Mammary epithelial cell (primary cell): ENCODE measurements at regions of chr11 and their contacts with region 1.

Region 1: DNA sequence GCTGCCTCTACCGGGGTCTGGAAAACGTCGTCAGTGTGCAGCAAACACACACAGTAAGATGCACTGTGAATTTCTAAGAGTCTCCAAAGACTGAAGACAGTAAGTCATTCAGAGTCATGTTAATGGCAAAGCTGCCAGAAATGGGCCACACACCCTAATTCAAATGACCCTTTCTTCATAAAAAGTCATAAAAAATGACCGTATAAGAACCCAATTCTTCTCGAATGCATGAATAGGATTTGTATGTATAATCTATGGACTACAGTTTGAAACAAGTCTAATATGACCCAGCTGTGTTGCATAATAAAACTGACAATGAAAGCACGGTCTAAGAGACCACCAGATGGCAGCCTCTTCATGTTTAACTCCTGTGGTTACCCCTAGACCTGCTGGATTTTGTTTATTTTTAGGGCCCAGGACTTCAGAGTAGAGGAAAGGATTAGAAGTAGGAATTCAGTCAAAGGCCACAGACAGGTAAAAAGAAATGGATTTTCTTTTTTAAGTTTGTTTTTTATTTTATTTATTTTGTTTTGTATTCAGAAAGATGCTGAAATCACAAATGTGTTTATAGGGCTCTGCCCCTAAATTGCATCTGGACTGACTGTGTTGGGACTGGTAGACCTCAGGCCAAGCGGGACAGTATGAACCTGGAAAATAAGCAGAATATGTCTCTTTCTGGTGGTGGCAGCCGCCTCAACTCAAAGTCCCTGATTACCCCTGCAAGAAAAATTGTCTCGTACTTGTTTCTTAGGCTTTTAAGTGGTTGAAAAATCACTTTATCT is 32.1 kb upstream of the SLC5A12 start:
- DNase-seq: peak; percentile 40
- H3K4me3 ChIP-seq: no peak overlapping the region
- H3K27ac ChIP-seq: no peak overlapping the region
- H3K4me1 ChIP-seq: no peaks in the 10 kb centered on the region
- H3K27me3 ChIP-seq: no peaks in the 10 kb centered on the region
- CTCF ChIP-seq: peak; percentile 72 to 81

Region 2: GRCh38 chr11:26792941-26793340 is 39.0 kb after region 1 on chr11:
- CTCF ChIA-PET with region 1: no interaction called
- dilution Hi-C with region 1: no loop called
- in situ Hi-C with region 1: no loop called
- intact Hi-C with region 1: no loop called
- DNase-seq: no peak
- H3K4me3 ChIP-seq: no peak overlapping the region
- H3K27ac ChIP-seq: no peak overlapping the region
- H3K4me1 ChIP-seq: no peaks in the 10 kb centered on the region
- H3K27me3 ChIP-seq: peaks cover 2% of the 10 kb centered on the region
- CTCF ChIP-seq: no peak

Region 3: DNA sequence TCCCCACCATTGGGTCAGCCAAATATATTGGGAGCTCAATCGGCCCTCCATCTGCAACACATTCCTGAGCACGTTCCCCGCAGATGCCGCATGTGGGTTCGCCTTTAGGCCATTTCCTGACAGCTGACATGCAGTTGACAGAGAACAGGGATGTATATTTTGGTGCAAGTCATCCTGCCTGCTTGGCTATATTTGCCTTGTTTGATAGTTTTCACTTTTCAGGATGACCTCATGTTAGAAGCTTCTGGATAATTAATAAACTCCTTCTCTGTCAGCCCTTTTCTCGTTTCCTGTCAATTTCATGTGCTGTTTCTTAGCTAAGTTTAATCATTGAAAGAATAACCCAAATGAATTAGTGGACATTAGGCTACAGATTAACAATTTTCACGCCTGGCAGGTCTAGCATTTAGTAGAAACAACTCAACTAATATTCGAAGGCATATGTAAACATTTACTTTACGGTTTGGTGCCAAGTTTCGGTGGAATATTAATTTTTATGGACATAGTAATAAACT is 73.7 kb after region 1 on chr11:
- CTCF ChIA-PET with region 1: no interaction called
- dilution Hi-C with region 1: no loop called
- in situ Hi-C with region 1: no loop called
- intact Hi-C with region 1: no loop called
- DNase-seq: peak; percentile 7
- H3K4me3 ChIP-seq: no peak overlapping the region
- H3K27ac ChIP-seq: no peak overlapping the region
- H3K4me1 ChIP-seq: no peaks in the 10 kb centered on the region
- H3K27me3 ChIP-seq: no peaks in the 10 kb centered on the region
- CTCF ChIP-seq: no peak

Region 4: DNA sequence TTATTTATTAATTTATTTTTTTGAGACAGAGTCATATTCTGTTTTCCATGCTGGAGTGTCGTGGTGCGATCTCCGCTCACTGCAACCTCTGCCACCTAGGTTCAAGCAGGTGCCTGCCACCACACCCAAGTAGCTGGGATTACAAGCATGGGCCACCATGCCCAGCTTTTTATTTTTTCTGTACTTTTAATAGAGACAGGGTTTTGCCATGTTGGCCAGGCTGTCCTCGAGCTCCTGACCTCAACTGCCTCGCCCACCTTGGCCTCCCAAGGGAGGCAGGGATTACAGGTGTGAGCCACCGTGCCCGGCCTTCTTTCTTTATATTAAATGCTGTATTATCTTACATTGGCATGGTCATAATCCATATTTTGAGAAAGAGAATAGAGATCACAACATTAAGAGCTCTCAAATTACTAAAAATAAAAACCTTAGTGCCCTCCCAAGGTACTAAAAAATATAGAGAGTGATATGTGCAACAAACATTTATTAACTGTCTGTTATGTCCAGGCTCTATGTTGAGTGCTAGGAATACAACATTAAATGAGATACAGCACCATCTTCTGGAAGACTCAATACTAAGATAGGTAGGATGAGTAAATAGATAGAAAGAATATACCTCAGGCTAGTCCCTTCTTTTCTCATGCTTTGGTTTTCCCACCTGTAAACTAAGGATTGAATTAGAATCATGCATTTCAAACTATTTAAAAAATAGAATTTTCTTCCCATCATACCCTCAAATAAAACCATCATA is 370.8 kb after region 1 on chr11:
- CTCF ChIA-PET with region 1: no interaction called
- dilution Hi-C with region 1: no loop called
- in situ Hi-C with region 1: loop called in 1 of 2 experiments (anchors 10 kb)
- intact Hi-C with region 1: loop called (anchors 1 kb)
- DNase-seq: peak; percentile 29
- H3K4me3 ChIP-seq: no peak overlapping the region
- H3K27ac ChIP-seq: no peak overlapping the region
- H3K4me1 ChIP-seq: no peaks in the 10 kb centered on the region
- H3K27me3 ChIP-seq: no peaks in the 10 kb centered on the region
- CTCF ChIP-seq: peak; percentile 17 to 47